ENCODE measurements at regions of chr20 and their contacts with region 1.

Region 1: DNA sequence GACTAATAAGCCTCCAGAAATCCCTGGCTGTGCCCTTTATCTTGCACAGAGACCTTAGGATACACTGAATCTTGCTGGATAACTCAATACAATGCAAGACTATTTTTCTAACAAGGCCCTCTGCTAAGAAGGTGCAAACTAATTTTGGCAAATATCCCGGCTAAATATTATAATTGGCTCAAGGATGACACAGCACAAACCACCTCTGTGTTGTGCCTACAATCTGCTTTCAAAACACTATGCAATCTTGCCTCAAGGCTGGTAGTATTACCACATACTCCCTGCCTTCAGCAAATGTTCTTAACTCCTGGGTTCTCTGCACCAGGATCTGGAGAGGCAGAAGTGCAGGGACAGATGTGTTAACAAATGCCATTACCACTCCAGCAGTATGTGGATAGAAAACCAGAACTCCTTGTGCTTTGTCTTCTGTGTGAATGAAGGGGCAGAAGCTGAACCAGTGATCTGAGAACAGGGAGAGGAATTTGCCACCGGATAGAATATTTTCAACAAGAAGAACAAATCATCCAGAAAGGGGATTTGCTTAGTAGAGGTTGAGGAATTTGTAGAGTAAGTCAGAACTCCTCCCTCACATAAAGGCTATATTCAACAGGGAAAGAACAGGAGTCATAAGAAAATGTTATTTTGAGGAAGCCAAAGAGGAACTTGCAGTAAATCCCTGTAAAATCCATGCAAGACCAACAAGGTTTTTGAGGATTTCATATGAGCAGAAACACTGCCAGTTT is 74.1 kb upstream of the SLC4A11 start:
- DNase-seq: no peak
- ATAC-seq: peak; percentile 58 to 83 (median 69)
- H3K4me3 ChIP-seq: no peak overlapping the region
- H3K27ac ChIP-seq: peak overlapping the region in 1 of 3 donors; percentile 14
- H3K4me1 ChIP-seq: peaks cover 0 to 15% (median 0%) of the 10 kb centered on the region in 4 donors
- H3K27me3 ChIP-seq: no peaks in the 10 kb centered on the region
- CTCF ChIP-seq: no peak
- POLR2A ChIP-seq: no peak

Region 2: GRCh38 chr20:3222635-3223600 is 90.2 kb before region 1 on chr20:
- intact Hi-C with region 1: loop called in 1 of 2 experiments (anchors 10 kb)
- DNase-seq: peak in 1 of 3 donors; percentile 85
- ATAC-seq: peak in 3 of 4 donors; percentile 55 to 92 (median 60)
- H3K4me3 ChIP-seq: no peak overlapping the region
- H3K27ac ChIP-seq: no peak overlapping the region
- H3K4me1 ChIP-seq: peaks cover 0 to 4% (median 0%) of the 10 kb centered on the region in 4 donors
- H3K27me3 ChIP-seq: no peaks in the 10 kb centered on the region
- CTCF ChIP-seq: no peak
- POLR2A ChIP-seq: no peak